ENCODE measurements at regions of chr2 and their contacts with region 1.

Region 1: GRCh38 chr2:213238753-213239495 is 45.3 kb upstream of the SPAG16 start:
- DNase-seq: peak; percentile 77
- H3K4me3 Mint-ChIP-seq: peak overlapping the region; percentile 60
- H3K27ac Mint-ChIP-seq: peak overlapping the region; percentile 99
- H3K4me1 Mint-ChIP-seq: peaks cover 60% of the 10 kb centered on the region
- H3K27me3 Mint-ChIP-seq: no peaks in the 10 kb centered on the region
- CTCF ChIP-seq: no peak

Region 2: DNA sequence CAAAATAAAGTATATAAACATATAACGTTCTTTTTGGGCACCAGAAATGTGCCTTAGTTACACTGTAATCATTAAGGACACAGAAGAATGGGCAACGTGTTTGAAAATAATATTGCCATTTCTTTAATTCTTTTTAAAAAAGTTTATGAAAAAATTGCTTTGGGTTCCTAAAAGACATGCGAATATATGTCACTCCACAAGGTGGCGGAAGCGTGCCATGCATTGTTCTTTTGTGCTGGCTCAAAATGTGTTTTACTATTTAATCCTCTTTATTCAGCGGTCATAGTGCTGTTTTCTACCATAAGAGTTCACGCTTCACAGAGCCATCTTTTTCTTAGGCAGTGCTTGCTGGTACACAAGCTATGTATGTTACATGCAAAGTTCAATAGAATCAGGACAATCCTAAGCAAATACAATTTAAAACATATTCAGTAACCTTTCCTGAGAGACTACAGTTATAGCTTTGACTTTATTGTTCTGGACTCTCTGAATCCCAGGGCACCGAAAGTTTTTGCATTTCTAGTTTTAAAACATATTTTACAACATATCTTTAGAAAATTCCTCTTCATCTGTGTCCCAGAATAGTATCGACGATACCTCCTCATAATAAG is 552.5 kb before region 1 on chr2:
- CTCF ChIA-PET with region 1: no interaction called
- intact Hi-C with region 1: loop called (anchors 2 kb)
- DNase-seq: peak; percentile 54
- H3K4me3 Mint-ChIP-seq: no peak overlapping the region
- H3K27ac Mint-ChIP-seq: no peak overlapping the region
- H3K4me1 Mint-ChIP-seq: peaks cover 13% of the 10 kb centered on the region
- H3K27me3 Mint-ChIP-seq: no peaks in the 10 kb centered on the region
- CTCF ChIP-seq: peak; percentile 86

Region 3: DNA sequence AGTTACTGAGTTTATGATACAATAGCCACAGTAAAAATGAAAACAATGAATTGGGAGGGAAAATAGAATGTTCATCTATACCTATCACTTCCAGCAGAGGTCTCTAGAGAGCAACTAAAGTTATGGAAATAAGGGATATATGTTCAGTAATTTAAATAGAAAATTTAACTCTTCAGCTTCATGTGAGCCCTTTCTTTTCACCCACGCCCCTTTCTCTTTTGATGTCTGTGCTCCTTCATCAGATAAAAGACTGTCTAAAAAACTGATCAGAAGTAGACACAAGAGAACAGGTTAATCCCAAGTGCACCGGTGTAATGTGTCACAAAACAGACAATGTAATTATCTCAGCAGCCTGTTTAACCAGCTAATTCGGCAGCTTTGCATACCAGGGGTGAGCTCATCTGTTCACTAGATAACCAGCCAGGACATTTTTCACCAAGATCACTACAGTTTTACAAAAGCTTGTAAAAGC is 461.9 kb before region 1 on chr2:
- CTCF ChIA-PET with region 1: no interaction called
- intact Hi-C with region 1: loop called (anchors 2 kb)
- DNase-seq: peak; percentile 3
- H3K4me3 Mint-ChIP-seq: no peak overlapping the region
- H3K27ac Mint-ChIP-seq: no peak overlapping the region
- H3K4me1 Mint-ChIP-seq: no peaks in the 10 kb centered on the region
- H3K27me3 Mint-ChIP-seq: no peaks in the 10 kb centered on the region
- CTCF ChIP-seq: peak; percentile 25

Region 4: GRCh38 chr2:212912445-212913103 is 326.4 kb before region 1 on chr2:
- CTCF ChIA-PET with region 1: no interaction called
- intact Hi-C with region 1: loop called (anchors 5 kb)
- DNase-seq: peak; percentile 58
- H3K4me3 Mint-ChIP-seq: peak overlapping the region; percentile 63
- H3K27ac Mint-ChIP-seq: peak overlapping the region; percentile 95
- H3K4me1 Mint-ChIP-seq: peaks cover 56% of the 10 kb centered on the region
- H3K27me3 Mint-ChIP-seq: no peaks in the 10 kb centered on the region
- CTCF ChIP-seq: no peak

Region 5: DNA sequence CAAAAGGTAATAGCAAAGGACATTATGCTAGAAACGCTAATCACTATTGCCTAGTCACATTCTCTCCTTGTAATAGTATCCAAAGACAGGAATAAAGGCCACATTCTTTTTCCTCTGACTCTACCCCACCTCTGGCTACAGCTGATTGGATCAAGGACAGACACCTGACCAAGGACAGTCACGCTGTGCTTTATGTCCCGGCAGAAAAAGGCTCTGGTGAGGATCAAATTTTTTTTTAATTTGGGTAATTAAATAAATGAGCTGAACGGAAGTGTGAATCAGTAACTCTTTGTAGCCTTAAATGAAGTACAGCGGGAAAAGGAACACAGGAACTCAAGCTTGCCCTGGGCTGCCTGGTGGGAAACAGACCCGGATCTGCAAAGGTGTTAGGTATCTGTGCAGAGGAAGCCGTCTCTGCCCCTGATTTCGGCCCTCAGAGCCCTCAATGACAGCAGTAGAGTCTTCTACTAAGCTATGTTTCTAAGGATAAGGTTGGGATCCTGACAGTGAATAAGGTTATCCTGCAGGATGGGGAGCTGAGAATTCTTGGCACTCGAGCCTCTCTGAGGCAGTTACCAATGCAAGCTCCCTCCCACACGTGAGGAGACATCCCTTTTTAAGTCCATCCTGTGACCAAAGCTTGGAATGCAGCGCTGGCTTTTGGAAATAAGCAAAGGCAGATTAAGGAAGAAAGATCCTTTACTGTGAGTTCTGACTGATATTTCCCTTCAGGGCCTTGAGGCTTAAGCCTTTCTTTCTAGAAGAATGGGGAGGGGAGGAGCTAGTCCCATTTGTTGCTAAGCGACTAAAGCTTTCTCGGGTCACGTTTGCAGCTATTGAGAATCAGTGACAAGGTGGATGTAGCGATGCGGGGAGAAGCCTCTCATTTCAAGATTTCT is 49.7 kb before region 1 on chr2:
- CTCF ChIA-PET with region 1: no interaction called
- intact Hi-C with region 1: loop called (anchors 2 kb)
- DNase-seq: no peak
- H3K4me3 Mint-ChIP-seq: no peak overlapping the region
- H3K27ac Mint-ChIP-seq: no peak overlapping the region
- H3K4me1 Mint-ChIP-seq: peaks cover 38% of the 10 kb centered on the region
- H3K27me3 Mint-ChIP-seq: no peaks in the 10 kb centered on the region
- CTCF ChIP-seq: no peak

Region 6: DNA sequence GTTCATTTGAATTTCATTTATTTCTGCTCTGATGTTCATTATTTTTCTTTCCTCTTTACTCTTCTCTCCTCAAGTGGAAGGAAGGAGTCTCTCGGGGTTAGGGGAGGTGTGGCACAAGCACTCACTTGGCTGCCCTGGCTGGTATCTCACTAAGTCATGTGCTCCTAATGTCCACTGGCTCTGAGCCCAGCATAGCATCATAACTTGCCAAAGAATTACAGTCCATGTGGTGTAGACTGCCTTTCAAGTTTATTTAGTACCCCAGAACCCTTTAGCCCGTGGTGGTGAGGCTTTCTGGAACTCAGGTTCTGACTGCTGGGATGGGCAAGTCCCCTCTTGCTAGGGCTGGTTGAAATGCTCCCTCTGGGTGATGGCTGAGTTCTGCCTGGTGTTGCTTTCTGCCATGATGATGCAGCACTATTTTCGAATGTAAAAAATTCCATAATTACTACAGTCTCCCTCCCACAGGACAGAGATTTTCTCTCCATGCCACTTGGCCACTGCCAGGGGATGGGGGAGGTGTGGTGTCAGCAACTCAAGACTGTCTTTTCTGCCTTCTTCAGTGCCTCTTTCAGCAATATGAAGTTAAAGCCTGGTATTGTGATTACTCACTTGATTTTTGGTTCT is 67.5 kb after region 1 on chr2:
- CTCF ChIA-PET with region 1: no interaction called
- intact Hi-C with region 1: no loop called
- DNase-seq: peak; percentile 21
- H3K4me3 Mint-ChIP-seq: no peak overlapping the region
- H3K27ac Mint-ChIP-seq: no peak overlapping the region
- H3K4me1 Mint-ChIP-seq: no peaks in the 10 kb centered on the region
- H3K27me3 Mint-ChIP-seq: no peaks in the 10 kb centered on the region
- CTCF ChIP-seq: no peak

Measured in Calu3 (cell line).